A549 (cell line): ENCODE measurements at regions of chr2 and their contacts with region 1.

Region 1: DNA sequence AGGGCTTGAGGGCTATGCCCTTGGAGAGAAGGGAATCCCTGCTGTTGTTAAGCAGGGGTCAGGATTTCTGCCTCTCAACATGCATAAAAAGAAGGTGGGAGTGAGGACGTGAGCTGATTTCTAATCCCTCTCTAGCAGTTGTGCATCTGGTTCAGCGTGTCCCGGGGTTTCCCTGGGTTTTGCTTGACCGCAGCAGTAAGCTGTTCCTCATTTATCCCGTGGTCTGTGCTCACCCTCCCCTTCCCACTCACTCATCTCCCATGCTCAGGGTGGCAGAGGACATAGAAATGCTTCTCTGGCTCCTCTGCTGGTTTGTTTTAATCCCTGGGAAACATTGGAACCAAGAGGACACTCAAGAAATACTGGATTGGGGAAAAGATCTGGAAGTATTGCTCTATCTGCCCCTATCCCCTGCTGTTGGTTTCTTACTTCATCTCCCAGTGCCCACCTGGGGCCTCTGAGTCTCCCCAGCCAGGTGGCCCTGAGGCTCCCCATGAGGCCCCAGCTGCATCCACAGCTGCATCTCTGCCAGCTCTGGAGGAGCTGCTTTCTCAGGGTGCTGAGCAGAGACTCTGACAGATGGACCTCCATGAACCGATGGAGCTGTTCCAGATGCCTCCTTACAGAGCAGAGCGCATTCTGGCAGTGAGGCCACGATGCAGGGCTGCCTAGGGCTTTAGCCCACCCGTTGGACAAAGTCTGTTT is 36.1 kb downstream of the TET3 start:
- DNase-seq: no peak
- ATAC-seq: peak; percentile 37 to 42; a peak in 4 of 6 replicates
- H3K4me3 ChIP-seq: no peak overlapping the region
- H3K27ac ChIP-seq: no peak overlapping the region
- H3K4me1 ChIP-seq: no peaks in the 10 kb centered on the region
- CTCF ChIP-seq: no peak
- EP300 ChIP-seq: no peak
- POLR2A ChIP-seq: no peak
- RAD21 ChIP-seq: no peak

Region 2: GRCh38 chr2:73859721-73860586 is 160.9 kb before region 1 on chr2:
- CTCF ChIA-PET with region 1: no interaction called
- POLR2A ChIA-PET with region 1: no interaction called
- DNase-seq: peak; percentile 73 to 79
- ATAC-seq: peak; percentile 93 to 95
- H3K4me3 ChIP-seq: no peak overlapping the region
- H3K27ac ChIP-seq: no peak overlapping the region
- H3K4me1 ChIP-seq: peaks cover 19% of the 10 kb centered on the region
- CTCF ChIP-seq: no peak
- EP300 ChIP-seq: no peak
- POLR2A ChIP-seq: no peak
- RAD21 ChIP-seq: no peak

Region 3: DNA sequence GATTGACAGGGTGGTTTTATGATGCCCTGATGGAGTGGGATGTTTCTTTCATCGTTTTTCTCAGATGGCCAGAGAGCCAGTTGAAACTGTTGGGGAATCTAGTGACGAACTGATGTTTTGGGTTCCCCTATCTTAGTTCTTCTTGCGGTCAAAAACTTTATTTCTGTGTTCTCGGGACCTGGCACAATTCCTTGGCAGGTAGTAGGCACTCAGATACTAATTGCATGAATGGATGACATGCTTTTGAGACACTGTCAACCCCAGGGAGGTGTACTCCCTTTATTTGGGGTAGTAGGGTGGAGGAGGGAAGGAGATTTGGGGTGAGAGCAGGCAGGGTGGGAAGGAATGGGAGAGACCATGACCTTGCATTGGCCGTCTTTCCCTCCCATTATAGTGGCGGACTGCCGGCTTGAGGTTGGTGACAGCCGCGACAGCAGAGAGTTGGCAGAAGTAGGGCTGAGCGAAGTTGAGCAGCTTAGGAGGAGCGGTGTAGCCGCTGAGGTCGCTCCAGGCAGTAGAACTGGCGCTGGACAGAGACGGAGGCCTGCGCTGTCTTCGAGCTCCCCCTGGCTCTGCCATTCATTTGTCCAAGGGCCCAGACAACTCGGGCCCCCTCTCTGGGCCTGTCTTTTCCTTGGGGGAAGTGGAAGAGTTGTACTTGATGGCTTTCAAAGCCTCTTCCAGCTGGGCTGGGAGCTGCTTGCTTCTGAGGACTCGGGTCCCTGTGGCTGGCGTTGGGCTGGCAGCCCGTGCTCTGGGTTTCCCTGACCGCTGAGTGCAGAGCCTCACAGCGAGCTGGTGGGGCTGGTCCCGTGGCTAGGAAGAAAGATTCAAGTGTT is 33.5 kb before region 1 on chr2:
- CTCF ChIA-PET with region 1: no interaction called
- POLR2A ChIA-PET with region 1: no interaction called
- DNase-seq: no peak
- ATAC-seq: no peak
- H3K4me3 ChIP-seq: no peak overlapping the region
- H3K27ac ChIP-seq: no peak overlapping the region
- H3K4me1 ChIP-seq: peaks cover 43% of the 10 kb centered on the region
- CTCF ChIP-seq: no peak
- EP300 ChIP-seq: no peak
- POLR2A ChIP-seq: no peak
- RAD21 ChIP-seq: no peak

Region 4: GRCh38 chr2:73998451-73998850 is 22.4 kb before region 1 on chr2:
- CTCF ChIA-PET with region 1: no interaction called
- POLR2A ChIA-PET with region 1: no interaction called
- DNase-seq: no peak
- ATAC-seq: no peak
- H3K4me3 ChIP-seq: no peak overlapping the region
- H3K27ac ChIP-seq: no peak overlapping the region
- H3K4me1 ChIP-seq: peaks cover 27% of the 10 kb centered on the region
- CTCF ChIP-seq: no peak
- EP300 ChIP-seq: no peak
- POLR2A ChIP-seq: no peak
- RAD21 ChIP-seq: no peak

Region 5: DNA sequence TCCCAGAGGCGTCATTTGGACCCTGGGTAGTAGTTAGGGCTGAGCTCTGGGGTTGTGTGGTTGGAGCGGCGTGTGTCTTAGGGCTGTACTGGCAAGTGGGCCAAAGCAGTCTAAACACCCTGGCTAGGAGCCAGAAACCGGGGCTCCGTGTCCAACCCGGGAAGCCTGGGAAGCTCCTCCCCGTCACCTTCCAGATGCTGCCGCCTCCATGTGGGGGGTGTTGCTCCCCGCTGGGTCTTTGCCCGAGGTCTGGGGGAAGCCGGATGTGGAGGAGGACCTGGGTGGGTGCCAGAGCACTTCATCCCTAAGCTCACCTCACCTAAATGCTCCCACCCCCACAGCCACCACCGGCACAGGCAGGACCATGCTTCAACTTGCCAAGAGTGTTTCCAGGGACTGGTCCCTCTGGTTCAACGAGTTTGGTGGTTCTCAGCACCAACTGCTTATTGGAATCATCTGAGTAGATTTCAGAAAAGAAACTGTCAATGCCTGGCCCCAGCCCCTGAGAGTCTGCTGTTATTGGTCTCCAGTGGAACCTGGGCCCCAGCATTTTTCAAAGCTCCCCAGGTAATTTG is 10.7 kb before region 1 on chr2:
- CTCF ChIA-PET with region 1: interaction called, 10 read pairs
- POLR2A ChIA-PET with region 1: no interaction called
- DNase-seq: no peak
- ATAC-seq: no peak
- H3K4me3 ChIP-seq: no peak overlapping the region
- H3K27ac ChIP-seq: no peak overlapping the region
- H3K4me1 ChIP-seq: no peaks in the 10 kb centered on the region
- CTCF ChIP-seq: no peak
- EP300 ChIP-seq: no peak
- POLR2A ChIP-seq: no peak
- RAD21 ChIP-seq: no peak